Mucosa of descending colon (tissue), 3 donors: ENCODE measurements at regions of chr1 and their contacts with region 1.

Region 1: GRCh38 chr1:204363335-204364124 is 3.8 kb upstream of the PLEKHA6 start:
- DNase-seq: peak; percentile 80 to 87 (median 82)
- ATAC-seq: peak; percentile 90
- H3K4me3 ChIP-seq: no peak overlapping the region
- H3K4me1 ChIP-seq: peaks cover 17% of the 10 kb centered on the region
- CTCF ChIP-seq: peak; percentile 89

Region 2: DNA sequence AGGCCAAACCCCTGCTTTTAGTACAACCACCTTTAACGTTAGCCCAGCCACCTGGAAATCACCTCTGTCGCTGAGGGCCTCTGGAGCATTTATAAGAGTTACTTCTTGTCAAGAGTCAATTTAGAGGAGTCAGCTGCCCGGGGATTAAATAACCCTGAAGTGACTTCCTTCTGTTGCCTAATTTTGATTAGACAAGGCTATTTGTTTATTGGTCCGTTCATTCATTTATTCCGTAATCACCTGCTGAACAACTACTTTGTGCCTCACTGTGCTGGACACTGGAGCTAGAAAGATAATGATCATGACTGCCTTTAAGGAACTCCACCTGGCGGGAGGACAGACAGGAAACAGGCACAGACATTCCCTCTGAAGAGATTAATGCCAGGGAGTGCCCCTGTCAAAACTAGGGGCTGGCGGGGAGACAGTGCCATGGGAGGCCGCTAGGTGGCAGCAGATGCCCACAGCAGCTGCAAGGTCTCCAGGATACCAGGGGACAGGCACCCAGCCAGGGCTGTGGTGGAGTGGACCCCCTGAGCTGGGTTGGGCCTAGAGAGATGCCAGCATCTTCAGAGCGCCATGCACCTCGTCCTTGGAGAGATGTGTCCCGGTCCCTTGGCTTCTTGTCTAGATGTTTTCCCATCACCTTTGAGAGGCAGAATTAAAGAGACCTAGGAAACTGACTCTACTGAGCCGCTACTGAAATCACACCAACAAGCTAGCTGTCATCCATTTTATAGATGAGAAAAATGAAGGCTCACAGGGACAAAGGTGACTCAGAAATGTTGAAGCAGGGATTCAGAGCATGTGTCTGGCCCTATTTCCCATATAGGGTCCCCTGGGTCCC is 201.1 kb before region 1 on chr1:
- intact Hi-C with region 1: loop called (anchors 5 kb)
- DNase-seq: peak; percentile 75 to 92 (median 90)
- ATAC-seq: peak; percentile 98
- H3K4me3 ChIP-seq: no peak overlapping the region
- H3K4me1 ChIP-seq: peaks cover 3% of the 10 kb centered on the region
- CTCF ChIP-seq: peak; percentile 99

Region 3: DNA sequence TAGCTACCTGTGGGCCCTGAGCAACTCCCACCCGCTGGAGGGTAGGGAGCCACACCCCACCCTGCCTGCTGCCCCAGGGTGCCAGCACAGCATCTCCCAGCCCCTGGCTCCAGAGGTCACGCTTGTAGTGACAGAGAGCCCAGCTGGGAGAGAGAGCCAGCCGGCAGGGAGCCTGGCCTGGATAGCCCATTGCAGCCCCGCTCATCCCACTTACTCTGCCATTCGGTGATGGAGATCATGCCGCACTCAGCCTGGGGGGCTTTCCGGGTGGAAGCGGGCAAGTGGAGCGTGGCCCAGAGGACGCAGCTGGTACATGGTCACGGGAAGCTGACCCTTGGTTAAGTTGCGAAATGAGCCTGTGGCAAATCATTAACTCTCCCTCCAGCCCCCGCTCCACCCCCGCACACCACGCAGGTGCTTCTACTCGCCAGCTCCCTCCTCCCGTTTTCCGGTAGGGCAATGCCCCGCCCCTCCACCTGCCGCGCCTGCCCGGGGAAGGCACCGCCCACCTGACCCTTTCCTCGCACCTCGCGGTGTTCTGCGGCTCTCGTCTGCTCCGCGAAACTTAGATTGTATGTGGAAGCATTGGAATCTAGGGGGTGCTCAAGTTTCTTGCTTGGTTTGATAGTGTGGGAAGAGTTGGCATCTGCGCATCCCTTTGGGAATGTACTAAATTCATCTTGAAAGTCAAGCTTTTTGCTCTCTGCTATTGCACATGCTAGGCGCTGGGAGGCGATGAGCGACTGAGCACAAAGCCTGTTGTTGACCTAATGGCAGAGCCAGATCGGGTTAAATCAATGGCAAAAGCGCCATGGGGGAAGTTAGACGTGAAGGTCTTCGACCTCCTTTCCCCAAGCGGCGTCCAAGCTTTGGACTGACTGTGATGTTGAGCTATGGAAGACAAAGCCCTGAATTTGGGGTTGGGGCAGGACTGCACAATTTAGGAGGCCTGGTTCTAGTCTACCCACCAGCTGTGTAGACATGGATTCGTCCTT is 149.6 kb before region 1 on chr1 and contains the start of gene GOLT1A:
- intact Hi-C with region 1: loop called in 1 of 2 experiments (anchors 5 kb)
- DNase-seq: peak; percentile 90 to 93 (median 90)
- ATAC-seq: peak; percentile 98
- H3K4me3 ChIP-seq: no peak within 1 kb of the TSS
- H3K4me1 ChIP-seq: peaks cover 2% of the 10 kb centered on the region
- CTCF ChIP-seq: peak; percentile 11
- total RNA-seq, gene GOLT1A: 2.5 to 11.4 (median 3.9) TPM

Region 4: DNA sequence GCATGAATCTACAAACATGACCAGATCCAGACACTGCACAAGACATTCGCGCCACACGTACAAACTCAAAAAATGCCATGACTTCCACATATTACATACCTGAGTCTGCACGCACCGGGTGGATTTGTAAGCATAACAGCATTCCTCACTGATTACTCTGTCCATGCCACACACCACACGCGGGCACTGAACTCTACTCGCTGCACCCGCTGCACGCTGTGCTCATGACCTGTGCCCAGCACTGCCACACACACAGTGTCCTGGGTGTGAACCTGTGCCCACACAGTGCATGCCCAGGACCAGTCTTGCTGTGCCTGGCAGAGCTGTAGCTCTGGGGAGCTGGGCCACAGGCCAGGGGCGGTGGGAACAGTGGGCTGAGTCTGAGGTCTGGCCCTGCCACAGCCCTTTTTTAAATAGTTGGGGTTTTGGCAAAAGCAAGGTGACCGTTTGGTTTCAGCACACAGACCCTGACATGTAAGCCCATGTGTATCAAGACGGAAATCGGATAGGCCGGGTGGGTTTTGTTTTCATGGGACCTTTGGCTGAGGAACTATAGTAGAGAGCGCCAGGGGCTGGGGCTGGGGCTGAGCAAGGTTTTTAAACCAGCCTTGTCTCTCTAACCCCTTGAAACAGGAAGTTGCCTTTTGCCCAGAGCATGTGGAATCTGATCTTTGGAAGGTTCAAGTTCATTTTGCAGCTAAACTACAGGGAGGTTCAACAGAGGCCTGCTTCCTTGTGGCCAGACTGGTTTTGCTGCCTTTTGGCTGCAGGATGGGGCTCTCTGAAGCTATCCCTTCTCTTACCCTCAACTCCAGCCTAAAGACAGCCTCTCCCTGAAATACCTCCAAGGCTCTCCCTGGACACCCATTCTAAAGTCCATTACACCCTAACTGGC is 137.4 kb before region 1 on chr1:
- intact Hi-C with region 1: no loop called
- DNase-seq: peak in 2 of 3 donors; percentile 64 to 69
- ATAC-seq: peak; percentile 82
- H3K4me3 ChIP-seq: no peak overlapping the region
- H3K4me1 ChIP-seq: peaks cover 9% of the 10 kb centered on the region
- CTCF ChIP-seq: no peak

Region 5: DNA sequence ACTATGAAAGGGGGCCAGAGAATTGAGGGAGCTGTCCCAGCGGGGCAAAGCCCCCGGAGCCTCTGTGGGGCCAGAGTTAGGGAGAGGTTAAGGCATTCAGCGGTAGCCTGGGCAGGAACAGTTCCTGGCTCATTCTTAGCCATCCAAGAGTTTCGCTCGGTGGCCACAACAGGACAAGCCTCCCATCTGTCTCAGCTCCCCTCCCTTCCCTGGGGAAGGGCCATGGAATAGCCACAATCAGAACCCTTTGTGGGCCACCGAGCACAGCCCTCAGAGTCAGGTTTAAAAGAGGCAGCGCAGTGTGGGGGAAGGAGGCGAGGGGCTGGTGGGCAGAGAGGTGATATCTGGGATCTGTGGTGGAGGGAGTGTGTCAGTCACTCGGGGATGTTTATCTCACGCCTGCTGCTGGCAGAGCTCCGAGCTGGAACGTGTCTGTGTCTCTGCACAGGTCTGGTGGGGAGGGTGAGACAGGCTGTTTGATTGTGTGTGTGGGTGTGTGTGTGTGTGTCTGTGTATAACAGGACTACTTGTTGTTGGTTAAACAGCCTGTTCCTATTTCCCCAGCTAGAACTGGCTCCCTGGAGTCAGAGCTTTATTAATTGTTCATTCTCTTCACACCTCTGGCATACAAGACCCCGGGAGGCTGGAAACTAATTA is 100.1 kb before region 1 on chr1:
- intact Hi-C with region 1: loop called in 1 of 2 experiments (anchors 10 kb)
- DNase-seq: no peak
- ATAC-seq: no peak
- H3K4me3 ChIP-seq: no peak overlapping the region
- H3K4me1 ChIP-seq: peaks cover 21% of the 10 kb centered on the region
- CTCF ChIP-seq: no peak